Ovary (tissue), 10 donors: ENCODE measurements at regions of chr12 and their contacts with region 1.

Region 1: GRCh38 chr12:63802012-63802608 is 22.4 kb downstream of the RXYLT1 start:
- DNase-seq: no peak
- H3K4me3 ChIP-seq: no peak overlapping the region
- H3K27ac ChIP-seq: no peak overlapping the region
- H3K4me1 ChIP-seq: no peaks in the 10 kb centered on the region
- H3K27me3 ChIP-seq: no peaks in the 10 kb centered on the region
- CTCF ChIP-seq: peak; percentile 20 to 53 (median 37)
- EP300 ChIP-seq: no peak
- POLR2A ChIP-seq: no peak

Region 2: GRCh38 chr12:63103494-63104131 is 698.5 kb before region 1 on chr12:
- intact Hi-C with region 1: loop called in 1 of 4 experiments (anchors 10 kb)
- DNase-seq: no peak
- H3K4me3 ChIP-seq: no peak overlapping the region
- H3K27ac ChIP-seq: no peak overlapping the region
- H3K4me1 ChIP-seq: no peaks in the 10 kb centered on the region
- H3K27me3 ChIP-seq: no peaks in the 10 kb centered on the region
- CTCF ChIP-seq: peak in 2 of 3 donors; percentile 24 to 42
- EP300 ChIP-seq: no peak
- POLR2A ChIP-seq: no peak

Region 3: GRCh38 chr12:63420206-63420644 is 381.9 kb before region 1 on chr12:
- intact Hi-C with region 1: no loop called
- DNase-seq: no peak
- H3K4me3 ChIP-seq: no peak overlapping the region
- H3K27ac ChIP-seq: no peak overlapping the region
- H3K4me1 ChIP-seq: no peaks in the 10 kb centered on the region
- H3K27me3 ChIP-seq: no peaks in the 10 kb centered on the region
- CTCF ChIP-seq: no peak
- EP300 ChIP-seq: no peak
- POLR2A ChIP-seq: no peak

Region 4: GRCh38 chr12:63668028-63668799 is 133.9 kb before region 1 on chr12 and contains the start of gene DPY19L2:
- intact Hi-C with region 1: loop called in 1 of 4 experiments (anchors 5 kb)
- DNase-seq: peak; percentile 86 to 93 (median 92)
- H3K4me3 ChIP-seq: peak within 1 kb of the TSS; percentile 52
- H3K27ac ChIP-seq: peak within 1 kb of the TSS; percentile 84 to 98
- H3K4me1 ChIP-seq: peaks cover 2% of the 10 kb centered on the region
- H3K27me3 ChIP-seq: no peaks in the 10 kb centered on the region
- CTCF ChIP-seq: no peak
- EP300 ChIP-seq: no peak
- POLR2A ChIP-seq: peak; percentile 50
- total RNA-seq, gene DPY19L2: 16.3 to 31.2 (median 25.5) TPM

Region 5: DNA sequence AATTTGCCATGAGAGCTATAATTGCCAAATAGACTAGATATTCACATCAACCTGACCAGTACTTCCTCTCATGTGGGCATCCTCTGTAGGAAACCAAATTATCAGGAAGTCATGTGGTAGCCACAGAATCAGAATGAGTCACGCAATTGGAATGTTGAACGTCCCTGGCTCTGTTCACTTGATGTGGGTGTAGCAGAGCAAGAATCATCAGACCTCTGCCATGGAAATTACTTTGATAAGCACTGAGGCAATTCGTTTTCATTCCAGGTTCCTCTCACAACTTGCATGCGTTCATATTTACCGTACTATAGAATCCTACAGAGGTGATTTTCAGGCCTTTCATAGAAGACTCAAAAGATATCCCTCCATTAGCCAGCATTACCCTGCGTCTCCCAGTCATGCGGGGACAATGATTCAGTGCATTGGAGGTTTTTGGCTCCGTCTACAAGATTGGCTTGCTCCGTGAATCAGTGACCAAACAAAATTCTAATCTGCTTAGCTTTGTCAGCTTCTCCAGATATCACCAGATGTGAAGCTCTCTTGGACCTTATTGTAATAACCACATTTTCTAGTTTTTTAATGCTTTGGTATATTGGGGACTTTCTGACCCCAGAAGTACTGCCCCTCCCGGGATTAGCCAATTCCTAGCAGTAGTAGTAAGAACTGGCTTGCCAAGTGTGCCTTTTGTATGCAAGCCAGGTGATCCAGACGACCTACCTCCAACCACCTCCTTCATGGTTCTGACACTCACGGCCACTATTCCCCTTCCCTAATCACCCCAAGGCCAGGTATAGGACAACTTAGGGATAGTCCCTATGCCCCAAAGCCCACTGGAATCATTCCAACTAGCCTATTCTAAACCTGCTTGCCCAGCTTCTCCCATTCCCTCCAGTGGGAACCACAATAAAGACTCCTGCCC is 286.6 kb after region 1 on chr12:
- intact Hi-C with region 1: no loop called
- DNase-seq: peak in 4 of 5 donors; percentile 36 to 75 (median 55)
- H3K4me3 ChIP-seq: no peak overlapping the region
- H3K27ac ChIP-seq: peak overlapping the region in 1 of 2 donors; percentile 53
- H3K4me1 ChIP-seq: peaks cover 16% of the 10 kb centered on the region
- H3K27me3 ChIP-seq: no peaks in the 10 kb centered on the region
- CTCF ChIP-seq: no peak
- EP300 ChIP-seq: no peak
- POLR2A ChIP-seq: no peak

Region 6: GRCh38 chr12:65093606-65094005 is 1291.5 kb after region 1 on chr12:
- intact Hi-C with region 1: no loop called
- DNase-seq: no peak
- H3K4me3 ChIP-seq: no peak overlapping the region
- H3K27ac ChIP-seq: no peak overlapping the region
- H3K4me1 ChIP-seq: no peaks in the 10 kb centered on the region
- H3K27me3 ChIP-seq: no peaks in the 10 kb centered on the region
- CTCF ChIP-seq: no peak
- EP300 ChIP-seq: no peak
- POLR2A ChIP-seq: no peak